Breast epithelium (tissue), 4 donors: ENCODE measurements at regions of chr2 and their contacts with region 1.

Region 1: DNA sequence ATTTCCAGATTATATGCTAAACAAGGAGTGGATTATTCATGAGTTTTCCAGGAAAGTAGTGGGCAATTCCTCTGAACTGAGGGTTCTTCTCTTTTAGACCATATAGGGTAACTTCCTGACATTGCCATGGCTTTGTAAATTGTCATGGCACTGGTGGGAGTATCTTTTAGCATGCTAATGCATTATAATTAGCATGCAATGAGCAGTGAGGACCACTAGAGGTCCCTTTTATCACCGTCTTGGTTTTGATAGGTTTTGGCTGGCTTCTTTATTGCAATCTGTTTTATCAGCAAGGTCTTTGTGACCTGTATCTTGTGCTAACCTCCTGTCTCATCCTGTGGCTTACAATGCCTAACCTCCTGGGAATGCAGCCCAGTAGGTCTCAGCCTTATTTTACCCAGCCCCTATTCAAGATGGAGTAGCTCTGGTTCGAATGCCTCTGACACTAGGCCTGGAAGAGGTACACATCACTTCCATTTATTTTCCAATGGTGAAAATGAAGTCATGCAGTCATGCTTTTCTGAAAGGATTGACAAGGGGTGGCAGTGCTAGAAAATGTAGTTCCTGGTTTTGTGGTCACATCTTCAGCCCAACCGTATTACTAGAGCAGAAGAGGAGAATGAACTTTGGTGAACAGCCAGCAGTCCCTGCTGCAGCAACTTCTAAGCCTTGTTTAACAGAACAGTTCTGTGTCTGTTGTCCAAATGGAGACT is 26.6 kb upstream of the ITGA4 start:
- DNase-seq: no peak
- H3K4me3 ChIP-seq: no peak overlapping the region
- H3K27ac ChIP-seq: no peak overlapping the region
- H3K4me1 ChIP-seq: no peaks in the 10 kb centered on the region
- H3K27me3 ChIP-seq: no peaks in the 10 kb centered on the region
- CTCF ChIP-seq: peak in 1 of 3 donors; percentile 8
- POLR2A ChIP-seq: no peak

Region 2: DNA sequence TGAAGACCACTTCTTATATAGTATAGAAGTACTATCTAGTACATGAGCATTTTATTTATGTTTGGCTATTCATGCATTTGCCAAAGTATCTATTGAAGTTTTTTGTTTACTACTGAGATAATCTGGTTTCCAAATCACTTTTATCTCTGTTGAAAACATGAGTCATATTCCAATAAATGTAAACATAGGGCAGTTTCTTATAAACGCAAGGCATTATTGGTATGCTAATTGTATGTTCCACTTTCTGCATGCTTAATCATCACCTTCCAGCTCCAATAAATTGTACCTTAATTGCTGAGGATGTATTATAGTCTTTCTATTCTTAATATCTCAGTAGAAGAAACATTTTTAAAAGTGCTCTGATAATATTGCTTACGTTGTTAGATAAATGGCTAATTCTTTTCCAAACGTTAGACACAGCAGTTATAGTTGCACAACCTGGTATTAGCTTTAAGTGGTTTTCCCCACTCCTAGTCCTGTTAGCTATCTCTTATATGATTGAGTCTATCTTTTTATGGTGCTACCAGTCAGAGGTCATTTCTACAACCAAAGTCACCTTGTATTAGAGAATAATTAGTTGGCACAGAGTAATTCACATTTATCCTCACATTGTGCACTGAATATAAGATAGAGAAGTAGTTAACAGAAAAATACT is 43.8 kb after region 1 on chr2:
- intact Hi-C with region 1: loop called (anchors 2 kb)
- DNase-seq: no peak
- H3K4me3 ChIP-seq: no peak overlapping the region
- H3K27ac ChIP-seq: no peak overlapping the region
- H3K4me1 ChIP-seq: no peaks in the 10 kb centered on the region
- H3K27me3 ChIP-seq: no peaks in the 10 kb centered on the region
- CTCF ChIP-seq: no peak
- POLR2A ChIP-seq: no peak

Region 3: DNA sequence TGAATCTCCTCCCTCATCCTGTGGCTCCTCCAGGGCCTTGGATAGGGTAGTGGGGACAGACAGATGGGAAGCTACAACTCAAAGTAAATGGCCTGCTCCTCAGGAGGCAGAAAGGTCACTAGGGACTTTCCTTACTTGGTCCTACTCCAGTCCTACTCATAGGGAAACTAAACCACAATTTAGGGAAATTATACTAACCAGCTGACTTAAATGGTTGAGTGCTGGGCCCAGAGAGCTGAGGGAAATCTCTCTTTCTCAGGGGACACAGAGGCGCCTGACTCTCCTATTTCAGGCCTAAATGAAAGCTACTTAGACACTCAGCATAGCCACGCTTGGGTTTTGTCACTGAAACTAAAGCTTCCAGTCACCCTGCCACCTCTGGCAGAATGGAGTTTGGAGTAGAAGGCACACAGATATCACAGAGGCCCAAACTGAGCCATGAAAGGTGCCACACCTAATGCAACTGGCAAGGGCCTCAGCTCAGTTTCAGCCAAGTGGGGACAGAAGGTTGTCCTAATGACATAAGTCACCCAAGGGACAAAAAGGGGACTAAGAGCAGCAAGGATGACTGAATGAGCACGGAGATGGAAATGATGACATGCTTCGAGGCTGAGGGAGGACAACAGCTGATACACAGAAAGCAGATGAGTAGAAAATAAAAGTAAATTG is 202.3 kb after region 1 on chr2:
- intact Hi-C with region 1: no loop called
- DNase-seq: no peak
- H3K4me3 ChIP-seq: no peak overlapping the region
- H3K27ac ChIP-seq: no peak overlapping the region
- H3K4me1 ChIP-seq: no peaks in the 10 kb centered on the region
- H3K27me3 ChIP-seq: no peaks in the 10 kb centered on the region
- CTCF ChIP-seq: no peak
- POLR2A ChIP-seq: no peak